Cardiac septum (tissue), 1 donor: ENCODE measurements at regions of chr1 and their contacts with region 1.

Region 1: GRCh38 chr1:89994805-89995597 is at the start of gene ZNF326:
- DNase-seq: peak; percentile 98
- total RNA-seq, gene ZNF326: 14.0 TPM

Region 2: DNA sequence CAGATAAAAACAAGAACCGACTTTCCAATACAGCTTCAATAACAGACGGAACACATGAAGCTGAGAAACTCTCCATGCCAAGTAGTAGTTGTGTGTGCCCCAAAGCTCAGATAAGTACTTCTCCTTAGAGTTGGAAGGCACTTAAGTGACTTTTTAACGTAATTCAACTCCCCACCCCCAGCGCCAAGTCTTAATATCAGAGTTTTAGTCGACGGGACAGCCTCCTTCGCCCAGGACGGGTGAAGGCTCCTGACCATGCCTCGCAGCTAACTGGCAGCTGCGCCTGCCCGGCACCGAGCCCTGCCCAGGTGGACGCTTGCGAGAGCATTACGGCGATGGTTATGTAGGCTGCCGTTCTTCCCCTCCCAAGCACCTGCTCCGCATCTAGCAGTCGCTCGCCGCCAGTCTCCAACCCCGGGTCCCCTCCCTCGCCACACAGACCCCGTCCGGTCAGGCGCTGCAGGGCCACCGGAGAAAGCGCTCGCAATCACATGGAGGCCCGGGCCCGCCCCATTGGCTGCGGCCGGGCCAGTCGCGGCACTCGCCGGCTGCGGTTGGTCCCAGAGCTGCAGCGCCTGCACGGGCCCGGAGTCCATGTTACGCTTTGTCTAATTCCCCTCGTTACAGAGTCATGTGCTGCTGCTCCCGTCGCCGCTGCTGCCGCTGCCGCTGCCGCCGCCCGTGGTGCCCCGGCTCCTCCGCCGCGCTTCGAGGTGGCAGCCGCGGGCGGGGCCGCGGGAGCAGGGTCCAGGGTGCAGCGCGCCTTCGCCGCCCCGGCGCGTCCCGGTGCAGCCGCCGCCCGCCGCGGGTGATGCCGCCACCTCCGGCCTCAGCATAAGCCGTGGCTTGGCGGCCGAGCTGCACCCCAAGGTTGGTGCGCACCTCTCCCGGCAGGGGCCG is 174.3 kb before region 1 on chr1 and contains the start of gene LRRC8D:
- intact Hi-C with region 1: loop called (anchors 1 kb)
- DNase-seq: peak; percentile 91
- total RNA-seq, gene LRRC8D: 3.4 TPM